HAP-1 (cell line): ENCODE measurements at regions of chrX and their contacts with region 1.

Region 1: GRCh38 chrX:77900688-77901087 is 1.4 kb downstream of the COX7B start:
- DNase-seq: no peak
- H3K4me3 ChIP-seq: peak overlapping the region; percentile 54
- H3K4me1 ChIP-seq: peaks cover 4% of the 10 kb centered on the region
- H3K27me3 ChIP-seq: no peaks in the 10 kb centered on the region

Region 2: DNA sequence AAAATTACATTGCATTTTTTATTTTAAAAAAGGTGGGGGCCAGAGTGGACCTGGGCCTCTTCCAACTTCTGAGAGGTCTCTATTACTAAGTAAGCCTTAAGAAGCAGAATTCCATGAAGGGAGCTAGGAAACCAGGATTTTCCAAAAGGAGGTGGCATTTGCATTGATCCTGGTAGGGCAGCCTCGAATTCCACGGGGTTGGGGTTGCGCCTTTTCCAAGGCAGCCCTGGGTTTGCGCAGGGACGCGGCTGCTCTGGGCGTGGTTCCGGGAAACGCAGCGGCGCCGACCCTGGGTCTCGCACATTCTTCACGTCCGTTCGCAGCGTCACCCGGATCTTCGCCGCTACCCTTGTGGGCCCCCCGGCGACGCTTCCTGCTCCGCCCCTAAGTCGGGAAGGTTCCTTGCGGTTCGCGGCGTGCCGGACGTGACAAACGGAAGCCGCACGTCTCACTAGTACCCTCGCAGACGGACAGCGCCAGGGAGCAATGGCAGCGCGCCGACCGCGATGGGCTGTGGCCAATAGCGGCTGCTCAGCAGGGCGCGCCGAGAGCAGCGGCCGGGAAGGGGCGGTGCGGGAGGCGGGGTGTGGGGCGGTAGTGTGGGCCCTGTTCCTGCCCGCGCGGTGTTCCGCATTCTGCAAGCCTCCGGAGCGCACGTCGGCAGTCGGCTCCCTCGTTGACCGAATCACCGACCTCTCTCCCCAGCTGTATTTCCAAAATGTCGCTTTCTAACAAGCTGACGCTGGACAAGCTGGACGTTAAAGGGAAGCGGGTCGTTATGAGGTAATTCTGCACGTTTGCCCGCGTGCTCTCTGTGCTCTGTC is 203.1 kb after region 1 on chrX and contains the start of gene PGK1:
- in situ Hi-C with region 1: loop called (anchors 10 kb)
- DNase-seq: peak; percentile 94 to 98
- H3K4me3 ChIP-seq: peak within 1 kb of the TSS; percentile 93
- H3K4me1 ChIP-seq: peaks cover 34% of the 10 kb centered on the region
- H3K27me3 ChIP-seq: no peaks in the 10 kb centered on the region